BJ (cell line): ENCODE measurements at regions of chr17 and their contacts with region 1.

Region 1: DNA sequence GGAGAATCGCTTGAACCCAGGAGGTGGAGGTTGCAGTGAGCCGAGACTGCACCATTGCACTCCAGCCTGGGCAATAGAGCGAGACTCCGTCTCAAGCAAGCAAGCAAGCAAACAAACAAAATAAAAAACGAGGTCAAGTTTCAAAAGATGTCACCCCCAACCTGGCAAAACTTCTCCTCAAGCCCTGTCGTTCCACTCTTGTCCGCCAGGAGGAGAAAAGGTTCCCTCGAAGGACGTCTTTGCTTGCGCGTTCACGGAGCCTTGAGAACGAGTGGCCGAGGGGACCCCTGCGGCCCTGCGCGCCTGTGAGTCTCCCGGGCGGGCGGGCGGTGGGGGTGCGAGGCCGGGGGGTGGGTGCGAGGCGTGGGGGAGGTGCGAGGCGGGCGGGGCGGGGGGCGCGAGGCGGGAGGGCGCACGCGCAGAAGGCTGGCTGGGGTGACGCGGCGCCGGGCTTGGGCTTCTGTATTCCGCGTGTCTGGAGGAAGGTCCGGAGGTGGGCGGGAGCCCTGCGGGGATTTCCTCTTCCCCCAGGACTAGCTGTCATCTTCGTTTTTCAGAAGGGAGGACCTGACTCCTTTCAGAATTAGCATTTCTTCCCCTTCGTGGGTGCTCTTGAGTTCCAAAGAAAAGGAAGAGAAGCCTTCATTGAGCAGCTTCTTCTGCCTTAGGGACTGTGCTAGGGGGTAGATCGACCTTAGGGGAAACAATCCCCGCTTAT is 3.7 kb downstream of the SLC52A1 start:
- DNase-seq: no peak
- H3K4me3 ChIP-seq: peak overlapping the region; percentile 36
- H3K27me3 ChIP-seq: 0 out of 2 replicates have a peak, but pooled peaks cover 6% of the 10 kb centered on the region
- CTCF ChIP-seq: peak; percentile 86

Region 2: DNA sequence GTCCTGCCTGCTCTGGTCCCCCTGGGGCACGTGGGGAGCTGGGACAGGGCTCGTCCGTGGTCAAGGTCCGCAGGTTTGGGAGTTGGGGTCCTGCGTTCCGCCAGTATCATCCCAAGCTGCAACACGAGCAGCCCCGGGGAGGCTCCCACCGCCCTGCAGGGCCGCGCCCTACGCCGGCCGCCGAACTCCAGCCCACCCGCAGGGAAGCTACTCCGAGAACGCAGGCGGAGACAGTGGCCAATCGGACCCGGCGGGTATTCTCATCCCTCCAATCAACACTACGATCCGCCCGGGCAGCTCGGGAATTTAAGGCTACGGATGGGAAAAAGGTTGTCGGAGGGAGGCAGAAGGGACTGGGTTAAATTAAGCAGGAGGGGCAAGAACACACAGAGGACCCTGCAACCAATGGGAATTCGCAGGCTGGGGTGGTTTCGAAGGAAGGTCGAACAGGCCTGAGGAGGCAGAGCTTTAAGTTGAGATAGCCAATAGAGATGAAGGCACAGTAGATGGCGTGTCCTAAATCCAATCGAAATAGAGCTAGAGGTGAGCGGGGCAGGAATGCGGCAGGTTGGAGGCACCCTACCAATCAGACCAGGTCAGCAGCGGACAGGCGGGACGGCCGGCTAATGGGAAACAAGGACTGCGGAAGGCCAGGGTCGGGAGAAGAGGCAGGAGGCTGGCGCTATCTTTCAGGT is 64.5 kb before region 1 on chr17:
- CTCF ChIA-PET with region 1: no interaction called
- POLR2A ChIA-PET with region 1: no interaction called
- DNase-seq: peak; percentile 99
- H3K4me3 ChIP-seq: peak overlapping the region; percentile 56
- H3K27me3 ChIP-seq: no peaks in the 10 kb centered on the region
- CTCF ChIP-seq: no peak

Region 3: DNA sequence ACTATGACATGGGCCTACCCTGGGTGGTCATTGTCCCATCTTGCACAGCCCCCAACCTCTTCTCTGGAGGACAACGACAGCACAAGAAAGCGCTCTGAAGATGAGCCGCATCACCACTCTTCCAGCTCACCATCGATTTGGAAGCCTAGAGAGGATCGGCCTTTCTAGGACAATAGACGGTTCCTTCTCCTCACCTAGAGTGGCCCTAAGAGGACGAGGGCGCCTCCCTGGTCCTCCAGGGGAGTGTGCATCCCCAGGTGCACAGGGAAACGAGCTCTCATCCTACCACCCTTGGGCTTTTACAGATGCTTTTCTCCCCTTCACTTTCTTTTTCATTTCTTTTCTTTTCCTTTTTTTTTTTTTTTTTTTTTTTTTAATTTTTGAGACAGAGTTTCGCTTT is 24.0 kb after region 1 on chr17:
- CTCF ChIA-PET with region 1: interaction called, 73 read pairs
- POLR2A ChIA-PET with region 1: no interaction called
- DNase-seq: no peak
- H3K4me3 ChIP-seq: no peak overlapping the region
- H3K27me3 ChIP-seq: peaks cover 1% of the 10 kb centered on the region; the same call in 1 of the 2 replicates
- CTCF ChIP-seq: no peak